ENCODE measurements at regions of chr3 and their contacts with region 1.

Region 1: DNA sequence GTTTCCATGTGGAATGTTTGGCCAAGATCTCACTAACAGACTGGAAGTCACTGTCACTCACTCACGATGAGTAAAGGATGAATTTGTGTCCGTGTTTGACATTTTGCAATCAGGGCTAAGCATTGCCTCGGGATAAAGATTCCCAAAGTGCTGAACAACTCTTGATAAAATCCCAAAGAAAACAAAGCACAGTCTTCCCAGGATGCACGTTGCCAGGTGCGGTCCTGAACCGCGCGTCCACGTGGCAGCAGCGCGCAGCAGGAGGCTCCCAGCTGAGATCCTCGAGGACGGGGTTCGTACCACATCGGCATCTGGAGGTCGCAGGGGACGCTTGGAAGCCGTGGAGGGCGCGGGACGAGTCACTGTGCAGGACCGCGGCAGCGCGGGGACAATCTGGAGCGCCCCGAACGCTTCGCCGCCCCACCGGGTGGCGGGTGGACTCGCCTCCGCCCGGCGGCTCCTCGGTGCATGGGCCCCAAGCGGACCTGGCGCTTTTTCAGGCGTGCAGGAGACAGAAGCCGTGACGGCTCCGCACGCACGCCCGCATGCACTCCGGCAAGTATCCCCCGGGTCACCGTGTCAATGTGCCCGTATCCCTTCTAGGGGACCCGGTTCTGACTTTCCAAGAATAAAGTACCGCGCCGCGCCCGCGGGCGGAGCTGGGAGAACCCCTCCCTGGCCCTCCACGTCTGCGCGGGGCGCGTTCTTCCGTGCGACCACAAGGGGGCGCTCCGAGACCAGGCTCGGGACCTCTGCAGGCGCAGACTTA is 17.7 kb downstream of the CPN2 start:
- DNase-seq: peak; percentile 79 to 92 (median 90)
- ATAC-seq: peak; percentile 98
- H3K4me3 Mint-ChIP-seq: peak overlapping the region; percentile 36 to 84 (median 72)
- H3K27ac Mint-ChIP-seq: no peak overlapping the region
- H3K4me1 Mint-ChIP-seq: peaks cover 0 to 8% (median 5%) of the 10 kb centered on the region in 4 donors
- H3K27me3 Mint-ChIP-seq: peaks cover 11 to 40% (median 22%) of the 10 kb centered on the region in 5 donors

Region 2: GRCh38 chr3:194404365-194405140 is 71.2 kb after region 1 on chr3:
- POLR2A ChIA-PET with region 1: interaction called, 10 read pairs
- DNase-seq: peak in 8 of 10 donors; percentile 19 to 70 (median 59)
- ATAC-seq: peak; percentile 74 to 75
- H3K4me3 Mint-ChIP-seq: peak overlapping the region in 2 of 10 donors; percentile 21 to 33
- H3K27ac Mint-ChIP-seq: no peak overlapping the region
- H3K4me1 Mint-ChIP-seq: peaks cover 3 to 10% (median 9%) of the 10 kb centered on the region in 4 donors
- H3K27me3 Mint-ChIP-seq: no peaks in the 10 kb centered on the region

Measured in naive thymus-derived CD8-positive, alpha-beta T cell (primary cell).